B cell (primary cell): ENCODE measurements at regions of chr17 and their contacts with region 1.

Region 1: DNA sequence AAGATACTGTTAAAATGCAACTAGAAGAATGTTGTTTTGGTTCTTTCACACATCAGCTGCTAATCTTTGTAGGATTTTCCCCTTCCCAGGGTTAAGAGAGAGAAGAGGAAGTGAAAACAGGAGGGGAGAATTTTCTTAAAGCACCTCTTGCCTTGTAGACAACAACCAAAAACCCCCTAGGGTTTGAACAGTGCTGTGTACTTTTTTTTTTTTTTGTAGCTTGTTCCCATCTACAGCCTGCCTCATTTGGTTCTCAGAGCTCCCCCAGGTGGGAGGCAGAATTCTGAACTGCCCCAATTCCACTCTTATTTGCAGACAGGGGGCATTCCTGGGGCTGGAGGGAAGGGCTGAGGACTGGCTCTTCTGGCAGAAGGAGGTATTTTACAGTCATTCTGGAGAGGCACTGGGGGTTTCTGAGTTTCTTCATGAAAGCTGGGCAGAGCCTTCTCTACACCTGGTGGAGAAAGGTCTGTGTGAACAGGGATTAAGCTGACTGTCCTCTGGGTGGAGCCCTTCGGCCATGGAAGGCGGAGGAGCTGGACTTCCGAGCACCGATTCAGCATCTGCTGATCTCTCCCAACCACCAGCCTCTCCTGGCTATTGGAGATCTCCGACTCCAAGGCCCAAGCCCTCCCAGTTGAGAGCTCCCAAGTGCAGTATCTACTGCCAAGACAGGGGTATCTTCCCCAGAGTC is 32.2 kb downstream of the SMARCE1 start:
- DNase-seq: peak; percentile 92
- ATAC-seq: peak; percentile 85
- H3K4me3 ChIP-seq: peak overlapping the region in 3 of 5 experiments; percentile 12 to 27 (median 25)
- H3K4me3 Mint-ChIP-seq: peak overlapping the region; percentile 73
- H3K27ac ChIP-seq: peak overlapping the region; percentile 90 to 96
- H3K27ac Mint-ChIP-seq: peak overlapping the region; percentile 94
- H3K4me1 ChIP-seq: peaks cover 58 to 63% of the 10 kb centered on the region in 2 donors
- H3K4me1 Mint-ChIP-seq: peaks cover 68% of the 10 kb centered on the region
- H3K27me3 ChIP-seq: no peaks in the 10 kb centered on the region
- H3K27me3 Mint-ChIP-seq: no peaks in the 10 kb centered on the region
- CTCF ChIP-seq: peak; percentile 68

Region 2: GRCh38 chr17:40264458-40265185 is 350.8 kb before region 1 on chr17:
- CTCF ChIA-PET with region 1: no interaction called
- POLR2A ChIA-PET with region 1: no interaction called
- intact Hi-C with region 1: no loop called
- DNase-seq: no peak
- ATAC-seq: no peak
- H3K4me3 ChIP-seq: no peak overlapping the region
- H3K4me3 Mint-ChIP-seq: no peak overlapping the region
- H3K27ac ChIP-seq: no peak overlapping the region
- H3K27ac Mint-ChIP-seq: peak overlapping the region; percentile 50
- H3K4me1 ChIP-seq: no peaks in the 10 kb centered on the region
- H3K4me1 Mint-ChIP-seq: no peaks in the 10 kb centered on the region
- H3K27me3 ChIP-seq: no peaks in the 10 kb centered on the region
- H3K27me3 Mint-ChIP-seq: no peaks in the 10 kb centered on the region
- CTCF ChIP-seq: no peak

Region 3: GRCh38 chr17:40362696-40363110 is 252.7 kb before region 1 on chr17:
- CTCF ChIA-PET with region 1: interaction called, 12 read pairs
- POLR2A ChIA-PET with region 1: no interaction called
- intact Hi-C with region 1: loop called (anchors 5 kb)
- DNase-seq: peak; percentile 86
- ATAC-seq: peak; percentile 80
- H3K4me3 ChIP-seq: peak overlapping the region in 4 of 5 experiments; percentile 28 to 58 (median 52)
- H3K4me3 Mint-ChIP-seq: peak overlapping the region; percentile 85
- H3K27ac ChIP-seq: no peak overlapping the region
- H3K27ac Mint-ChIP-seq: peak overlapping the region; percentile 34
- H3K4me1 ChIP-seq: peaks cover 15 to 17% of the 10 kb centered on the region in 2 donors
- H3K4me1 Mint-ChIP-seq: peaks cover 12% of the 10 kb centered on the region
- H3K27me3 ChIP-seq: peaks cover 0 to 34% (median 8%) of the 10 kb centered on the region in 4 experiments
- H3K27me3 Mint-ChIP-seq: peaks cover 12% of the 10 kb centered on the region
- CTCF ChIP-seq: peak; percentile 70

Region 4: DNA sequence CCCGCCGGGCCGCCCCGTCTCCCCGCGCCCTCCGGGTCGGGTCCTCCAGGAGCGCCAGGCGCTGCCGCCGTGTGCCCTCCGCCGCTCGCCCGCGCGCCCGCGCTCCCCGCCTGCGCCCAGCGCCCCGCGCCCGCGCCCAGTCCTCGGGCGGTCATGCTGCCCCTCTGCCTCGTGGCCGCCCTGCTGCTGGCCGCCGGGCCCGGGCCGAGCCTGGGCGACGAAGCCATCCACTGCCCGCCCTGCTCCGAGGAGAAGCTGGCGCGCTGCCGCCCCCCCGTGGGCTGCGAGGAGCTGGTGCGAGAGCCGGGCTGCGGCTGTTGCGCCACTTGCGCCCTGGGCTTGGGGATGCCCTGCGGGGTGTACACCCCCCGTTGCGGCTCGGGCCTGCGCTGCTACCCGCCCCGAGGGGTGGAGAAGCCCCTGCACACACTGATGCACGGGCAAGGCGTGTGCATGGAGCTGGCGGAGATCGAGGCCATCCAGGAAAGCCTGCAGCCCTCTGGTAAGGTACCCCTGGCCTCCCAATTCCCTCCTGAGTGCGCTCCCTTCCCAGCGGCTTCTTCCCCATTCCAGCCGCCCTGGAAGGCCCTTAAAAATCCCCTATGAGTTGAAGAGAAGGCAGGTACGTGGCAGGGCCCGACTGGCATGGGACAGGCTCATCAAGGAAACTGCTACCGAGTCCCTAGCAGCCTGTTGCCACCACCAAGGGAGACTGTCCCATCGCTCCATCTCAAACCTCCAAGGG is 171.7 kb before region 1 on chr17:
- CTCF ChIA-PET with region 1: interaction called, 34 read pairs
- POLR2A ChIA-PET with region 1: interaction called, 4 read pairs
- intact Hi-C with region 1: loop called (anchors 1 kb)
- DNase-seq: peak; percentile 83
- ATAC-seq: peak; percentile 80
- H3K4me3 ChIP-seq: peak overlapping the region; percentile 28 to 66 (median 48)
- H3K4me3 Mint-ChIP-seq: peak overlapping the region; percentile 88
- H3K27ac ChIP-seq: peak overlapping the region in 1 of 2 donors; percentile 62
- H3K27ac Mint-ChIP-seq: peak overlapping the region; percentile 84
- H3K4me1 ChIP-seq: peaks cover 29 to 44% of the 10 kb centered on the region in 2 donors
- H3K4me1 Mint-ChIP-seq: peaks cover 46% of the 10 kb centered on the region
- H3K27me3 ChIP-seq: peaks cover 0 to 6% (median 0%) of the 10 kb centered on the region in 4 experiments
- H3K27me3 Mint-ChIP-seq: no peaks in the 10 kb centered on the region
- CTCF ChIP-seq: peak; percentile 47

Region 5: GRCh38 chr17:40522250-40522952 is 93.0 kb before region 1 on chr17:
- CTCF ChIA-PET with region 1: no interaction called
- POLR2A ChIA-PET with region 1: no interaction called
- intact Hi-C with region 1: no loop called
- DNase-seq: no peak
- ATAC-seq: no peak
- H3K4me3 ChIP-seq: no peak overlapping the region
- H3K4me3 Mint-ChIP-seq: no peak overlapping the region
- H3K27ac ChIP-seq: no peak overlapping the region
- H3K27ac Mint-ChIP-seq: no peak overlapping the region
- H3K4me1 ChIP-seq: peaks cover 18 to 24% of the 10 kb centered on the region in 2 donors
- H3K4me1 Mint-ChIP-seq: peaks cover 31% of the 10 kb centered on the region
- H3K27me3 ChIP-seq: no peaks in the 10 kb centered on the region
- H3K27me3 Mint-ChIP-seq: no peaks in the 10 kb centered on the region
- CTCF ChIP-seq: no peak

Region 6: GRCh38 chr17:40536295-40537171 is 78.9 kb before region 1 on chr17:
- CTCF ChIA-PET with region 1: interaction called, 93 read pairs
- POLR2A ChIA-PET with region 1: interaction called, 17 read pairs
- intact Hi-C with region 1: loop called (anchors 1 kb)
- DNase-seq: no peak
- ATAC-seq: no peak
- H3K4me3 ChIP-seq: no peak overlapping the region
- H3K4me3 Mint-ChIP-seq: no peak overlapping the region
- H3K27ac ChIP-seq: no peak overlapping the region
- H3K27ac Mint-ChIP-seq: peak overlapping the region; percentile 78
- H3K4me1 ChIP-seq: peaks cover 47 to 77% of the 10 kb centered on the region in 2 donors
- H3K4me1 Mint-ChIP-seq: peaks cover 78% of the 10 kb centered on the region
- H3K27me3 ChIP-seq: no peaks in the 10 kb centered on the region
- H3K27me3 Mint-ChIP-seq: no peaks in the 10 kb centered on the region
- CTCF ChIP-seq: no peak

Region 7: DNA sequence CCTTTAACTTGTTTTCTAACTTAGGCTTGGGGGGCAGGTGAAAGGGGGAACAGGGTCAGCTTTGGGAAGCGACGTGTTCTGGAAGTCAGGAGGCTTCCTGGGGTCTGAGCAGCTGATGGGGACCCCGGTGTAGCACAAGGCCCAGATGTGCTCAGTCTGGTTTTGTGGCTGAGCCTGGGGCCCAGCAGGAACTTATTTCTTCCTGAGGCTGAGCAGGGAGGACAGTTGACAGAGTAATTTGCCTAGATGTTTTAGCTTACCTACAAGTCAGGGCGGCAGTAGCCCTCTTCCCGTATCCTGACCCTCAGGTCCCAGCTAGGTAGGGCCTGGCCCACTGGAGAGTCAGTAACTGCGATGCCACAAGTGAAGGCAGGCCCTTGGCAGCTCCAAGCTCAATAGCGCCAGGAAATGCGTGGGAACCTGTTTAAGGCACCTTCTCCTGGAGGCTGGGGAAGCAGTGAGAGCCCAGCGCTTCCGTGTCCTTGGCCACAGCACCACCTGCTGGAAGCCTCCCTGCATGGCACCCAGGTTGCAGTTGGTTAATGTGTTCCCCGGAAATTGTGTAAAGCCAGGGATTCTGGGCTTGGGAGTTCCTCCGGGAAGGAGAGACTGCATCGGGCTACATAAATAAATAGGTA is 55.4 kb before region 1 on chr17:
- CTCF ChIA-PET with region 1: interaction called, 634 read pairs
- POLR2A ChIA-PET with region 1: interaction called, 132 read pairs
- intact Hi-C with region 1: loop called (anchors 1 kb)
- DNase-seq: peak; percentile 88
- ATAC-seq: peak; percentile 46
- H3K4me3 ChIP-seq: peak overlapping the region; percentile 34 to 90 (median 83)
- H3K4me3 Mint-ChIP-seq: peak overlapping the region; percentile 92
- H3K27ac ChIP-seq: peak overlapping the region; percentile 90 to 98
- H3K27ac Mint-ChIP-seq: peak overlapping the region; percentile 94
- H3K4me1 ChIP-seq: peaks cover 79 to 99% of the 10 kb centered on the region in 2 donors
- H3K4me1 Mint-ChIP-seq: peaks cover 79% of the 10 kb centered on the region
- H3K27me3 ChIP-seq: no peaks in the 10 kb centered on the region
- H3K27me3 Mint-ChIP-seq: no peaks in the 10 kb centered on the region
- CTCF ChIP-seq: peak; percentile 97

Region 8: DNA sequence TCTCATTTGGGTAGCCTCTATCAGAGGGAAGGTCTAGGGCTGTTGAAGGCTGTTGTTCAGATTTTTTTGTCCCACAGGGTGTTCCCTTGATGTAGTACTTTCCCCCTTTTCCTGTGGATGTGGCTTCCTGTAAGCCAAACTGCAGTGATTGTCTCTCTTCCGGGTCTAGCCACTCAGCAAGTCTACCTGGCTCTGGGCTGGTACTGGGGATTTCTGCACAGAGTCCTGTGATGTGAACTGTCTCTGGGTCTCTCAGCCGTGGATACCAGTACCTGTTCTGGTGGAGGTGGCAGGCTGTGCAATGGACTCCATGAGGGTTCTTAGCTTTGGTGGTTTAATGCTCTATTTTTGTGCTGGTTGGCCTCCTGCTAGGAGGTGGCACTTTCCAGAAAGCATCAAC is 26.9 kb before region 1 on chr17:
- CTCF ChIA-PET with region 1: interaction called, 29 read pairs
- POLR2A ChIA-PET with region 1: interaction called, 5 read pairs
- intact Hi-C with region 1: no loop called
- DNase-seq: no peak
- ATAC-seq: no peak
- H3K4me3 ChIP-seq: no peak overlapping the region
- H3K4me3 Mint-ChIP-seq: no peak overlapping the region
- H3K27ac ChIP-seq: no peak overlapping the region
- H3K27ac Mint-ChIP-seq: peak overlapping the region; percentile 41
- H3K4me1 ChIP-seq: peaks cover 48 to 54% of the 10 kb centered on the region in 2 donors
- H3K4me1 Mint-ChIP-seq: peaks cover 67% of the 10 kb centered on the region
- H3K27me3 ChIP-seq: no peaks in the 10 kb centered on the region
- H3K27me3 Mint-ChIP-seq: no peaks in the 10 kb centered on the region
- CTCF ChIP-seq: no peak

Region 9: GRCh38 chr17:40791787-40792436 is 176.5 kb after region 1 on chr17:
- CTCF ChIA-PET with region 1: interaction called, 25 read pairs
- POLR2A ChIA-PET with region 1: no interaction called
- intact Hi-C with region 1: loop called (anchors 1 kb)
- DNase-seq: peak; percentile 25
- ATAC-seq: no peak
- H3K4me3 ChIP-seq: no peak overlapping the region
- H3K4me3 Mint-ChIP-seq: no peak overlapping the region
- H3K27ac ChIP-seq: no peak overlapping the region
- H3K27ac Mint-ChIP-seq: no peak overlapping the region
- H3K4me1 ChIP-seq: no peaks in the 10 kb centered on the region
- H3K4me1 Mint-ChIP-seq: no peaks in the 10 kb centered on the region
- H3K27me3 ChIP-seq: peaks cover 0 to 17% (median 2%) of the 10 kb centered on the region in 4 experiments
- H3K27me3 Mint-ChIP-seq: peaks cover 35% of the 10 kb centered on the region
- CTCF ChIP-seq: peak; percentile 41